GM12878 (cell line): ENCODE measurements at regions of chr12 and their contacts with region 1.

Region 1: GRCh38 chr12:48903982-48904411 is 21.3 kb downstream of the FKBP11 start:
- DNase-seq: peak; percentile 20
- ATAC-seq: peak; percentile 97
- H3K4me3 ChIP-seq: peak overlapping the region; percentile 40; the same call in 1 of the 2 replicates
- H3K27ac ChIP-seq: no peak overlapping the region
- H3K4me1 ChIP-seq: peaks cover 8% of the 10 kb centered on the region; the same call in 1 of the 2 replicates
- H3K27me3 ChIP-seq: no peaks in the 10 kb centered on the region; a peak in 1 of 4 replicates
- CTCF ChIP-seq: peak; percentile 66 to 81 (median 75)
- EP300 ChIP-seq: no peak
- POLR2A ChIP-seq: no peak
- RAD21 ChIP-seq: peak; percentile 41

Region 2: GRCh38 chr12:48542300-48542928 is 361.6 kb before region 1 on chr12:
- CTCF ChIA-PET with region 1: no interaction called
- POLR2A ChIA-PET with region 1: no interaction called
- RAD21 ChIA-PET with region 1: no interaction called
- SMC1A ChIA-PET with region 1: no interaction called
- in situ Hi-C with region 1: no loop called
- intact Hi-C with region 1: no loop called
- DNase-seq: no peak
- ATAC-seq: peak; percentile 75
- H3K4me3 ChIP-seq: no peak overlapping the region
- H3K27ac ChIP-seq: no peak overlapping the region
- H3K4me1 ChIP-seq: 0 out of 2 replicates have a peak, but pooled peaks cover 5% of the 10 kb centered on the region
- H3K27me3 ChIP-seq: no peaks in the 10 kb centered on the region
- CTCF ChIP-seq: peak; percentile 76 to 86 (median 79)
- EP300 ChIP-seq: no peak
- POLR2A ChIP-seq: no peak
- RAD21 ChIP-seq: peak; percentile 98

Region 3: DNA sequence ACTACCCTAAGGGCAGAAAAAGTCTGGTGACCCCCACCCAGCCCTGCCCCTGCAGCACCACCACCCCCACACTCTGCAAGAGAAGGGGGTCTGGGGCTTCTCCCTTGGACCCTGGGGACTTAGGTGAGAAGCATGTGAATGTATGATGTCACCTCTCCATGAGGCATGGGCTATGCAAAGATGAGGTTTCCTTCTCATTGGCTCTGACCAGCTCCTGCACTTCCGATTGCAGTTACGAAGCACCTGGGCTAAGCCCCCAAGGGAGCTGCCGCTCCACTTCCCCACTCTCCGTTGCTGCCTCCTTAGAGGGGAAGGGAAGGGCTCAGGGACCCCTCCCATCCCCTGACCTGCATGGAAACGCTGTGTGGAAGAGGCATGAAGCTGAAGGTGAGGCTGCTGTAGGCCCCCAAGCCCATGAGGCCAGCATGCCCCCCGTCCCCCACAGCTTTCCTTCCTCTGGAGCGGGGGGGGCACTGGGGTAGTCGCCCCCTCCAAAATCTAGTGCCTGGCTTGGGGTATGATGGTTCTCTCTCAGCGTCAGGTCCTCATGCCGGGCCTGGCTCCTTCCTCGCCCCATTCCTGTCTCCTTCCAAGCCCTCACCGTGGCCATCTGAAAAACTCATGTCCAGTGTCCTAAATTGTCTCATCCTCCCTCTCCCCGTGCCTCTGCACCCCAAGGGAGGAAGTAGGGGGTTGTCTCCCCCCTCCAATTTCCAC is 46.6 kb before region 1 on chr12:
- CTCF ChIA-PET with region 1: interaction called, 112 read pairs
- POLR2A ChIA-PET with region 1: interaction called, 13 read pairs
- RAD21 ChIA-PET with region 1: interaction called, 49 read pairs
- SMC1A ChIA-PET with region 1: interaction called, 44 read pairs
- in situ Hi-C with region 1: no loop called
- intact Hi-C with region 1: loop called (anchors 2 kb)
- DNase-seq: no peak
- ATAC-seq: peak; percentile 58
- H3K4me3 ChIP-seq: no peak overlapping the region
- H3K27ac ChIP-seq: no peak overlapping the region
- H3K4me1 ChIP-seq: peaks cover 3% of the 10 kb centered on the region; the same call in 1 of the 2 replicates
- H3K27me3 ChIP-seq: no peaks in the 10 kb centered on the region
- CTCF ChIP-seq: no peak
- EP300 ChIP-seq: no peak
- POLR2A ChIP-seq: no peak
- RAD21 ChIP-seq: no peak

Region 4: GRCh38 chr12:48890657-48891418 is 13.2 kb before region 1 on chr12:
- CTCF ChIA-PET with region 1: interaction called, 51 read pairs
- POLR2A ChIA-PET with region 1: interaction called, 5 read pairs
- RAD21 ChIA-PET with region 1: interaction called, 8 read pairs
- SMC1A ChIA-PET with region 1: interaction called, 19 read pairs
- in situ Hi-C with region 1: no loop called
- intact Hi-C with region 1: no loop called
- DNase-seq: no peak
- ATAC-seq: peak; percentile 100
- H3K4me3 ChIP-seq: no peak overlapping the region
- H3K27ac ChIP-seq: no peak overlapping the region
- H3K4me1 ChIP-seq: no peaks in the 10 kb centered on the region
- H3K27me3 ChIP-seq: no peaks in the 10 kb centered on the region; a peak in 1 of 4 replicates
- CTCF ChIP-seq: peak; percentile 94 to 95 (median 95)
- EP300 ChIP-seq: no peak
- POLR2A ChIP-seq: no peak
- RAD21 ChIP-seq: peak; percentile 78

Region 5: DNA sequence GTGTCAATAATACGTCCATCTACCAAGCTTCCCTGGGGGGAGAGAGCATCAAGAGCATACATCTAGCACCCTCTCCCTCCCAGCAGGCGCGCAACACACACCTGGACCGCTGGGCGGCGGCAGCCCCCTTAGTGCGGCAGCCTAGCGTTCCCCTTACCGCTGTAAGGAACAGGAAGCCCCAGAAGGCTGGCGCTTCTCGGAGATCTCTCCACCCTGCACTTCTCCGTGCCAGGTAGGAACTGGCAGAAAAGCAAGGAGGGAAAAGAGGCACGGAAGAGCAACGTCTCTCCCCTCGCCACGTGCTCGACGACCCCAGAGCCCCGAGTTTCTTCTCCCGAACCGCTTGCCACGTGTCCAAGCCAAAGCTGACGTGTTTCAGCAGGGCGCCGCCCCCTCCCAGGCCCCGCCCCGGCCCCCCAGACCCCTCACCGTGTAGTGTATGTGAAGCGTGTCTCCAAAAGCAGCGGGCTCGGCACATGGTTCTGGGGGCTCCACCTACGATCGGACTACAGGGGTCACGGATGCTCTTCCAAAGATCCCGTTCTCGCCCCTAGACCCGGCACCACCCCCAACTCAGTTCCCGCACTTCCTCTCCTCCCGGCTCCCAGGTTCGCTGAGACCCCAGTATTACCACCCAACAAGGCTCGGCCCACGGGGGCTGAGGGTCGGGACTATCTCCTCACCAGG is 20.8 kb after region 1 on chr12:
- CTCF ChIA-PET with region 1: interaction called, 16 read pairs
- POLR2A ChIA-PET with region 1: interaction called, 8 read pairs
- RAD21 ChIA-PET with region 1: interaction called, 3 read pairs
- SMC1A ChIA-PET with region 1: interaction called, 5 read pairs
- in situ Hi-C with region 1: no loop called
- intact Hi-C with region 1: no loop called
- DNase-seq: peak; percentile 40
- ATAC-seq: peak; percentile 92
- H3K4me3 ChIP-seq: peak overlapping the region; percentile 98
- H3K27ac ChIP-seq: peak overlapping the region; percentile 90
- H3K4me1 ChIP-seq: peaks cover 22% of the 10 kb centered on the region
- H3K27me3 ChIP-seq: no peaks in the 10 kb centered on the region
- CTCF ChIP-seq: peak; percentile 88 to 95 (median 93)
- EP300 ChIP-seq: no peak
- POLR2A ChIP-seq: no peak
- RAD21 ChIP-seq: peak; percentile 88